Endothelial cell of umbilical vein (primary cell): ENCODE measurements at regions of chr19 and their contacts with region 1.

Region 1: GRCh38 chr19:44752816-44753618 is 4.5 kb downstream of the BCL3 start:
- DNase-seq: peak; percentile 91
- H3K4me3 ChIP-seq: peak overlapping the region in 1 of 3 experiments; percentile 17
- H3K27ac ChIP-seq: peak overlapping the region; percentile 86
- H3K4me1 ChIP-seq: peaks cover 44% of the 10 kb centered on the region
- H3K27me3 ChIP-seq: no peaks in the 10 kb centered on the region
- CTCF ChIP-seq: no peak
- POLR2A ChIP-seq: peak; percentile 40

Region 2: GRCh38 chr19:44677019-44677821 is 75.8 kb before region 1 on chr19:
- CTCF ChIA-PET with region 1: no interaction called
- POLR2A ChIA-PET with region 1: no interaction called
- dilution Hi-C with region 1: no loop called
- intact Hi-C with region 1: no loop called
- DNase-seq: peak; percentile 57
- H3K4me3 ChIP-seq: no peak overlapping the region
- H3K27ac ChIP-seq: peak overlapping the region; percentile 37
- H3K4me1 ChIP-seq: peaks cover 8% of the 10 kb centered on the region
- H3K27me3 ChIP-seq: no peaks in the 10 kb centered on the region
- CTCF ChIP-seq: no peak
- POLR2A ChIP-seq: no peak

Region 3: GRCh38 chr19:44702551-44703176 is 50.4 kb before region 1 on chr19:
- CTCF ChIA-PET with region 1: no interaction called
- POLR2A ChIA-PET with region 1: no interaction called
- dilution Hi-C with region 1: no loop called
- intact Hi-C with region 1: no loop called
- DNase-seq: no peak
- H3K4me3 ChIP-seq: no peak overlapping the region
- H3K27ac ChIP-seq: no peak overlapping the region
- H3K4me1 ChIP-seq: no peaks in the 10 kb centered on the region
- H3K27me3 ChIP-seq: no peaks in the 10 kb centered on the region
- CTCF ChIP-seq: no peak
- POLR2A ChIP-seq: no peak

Region 4: DNA sequence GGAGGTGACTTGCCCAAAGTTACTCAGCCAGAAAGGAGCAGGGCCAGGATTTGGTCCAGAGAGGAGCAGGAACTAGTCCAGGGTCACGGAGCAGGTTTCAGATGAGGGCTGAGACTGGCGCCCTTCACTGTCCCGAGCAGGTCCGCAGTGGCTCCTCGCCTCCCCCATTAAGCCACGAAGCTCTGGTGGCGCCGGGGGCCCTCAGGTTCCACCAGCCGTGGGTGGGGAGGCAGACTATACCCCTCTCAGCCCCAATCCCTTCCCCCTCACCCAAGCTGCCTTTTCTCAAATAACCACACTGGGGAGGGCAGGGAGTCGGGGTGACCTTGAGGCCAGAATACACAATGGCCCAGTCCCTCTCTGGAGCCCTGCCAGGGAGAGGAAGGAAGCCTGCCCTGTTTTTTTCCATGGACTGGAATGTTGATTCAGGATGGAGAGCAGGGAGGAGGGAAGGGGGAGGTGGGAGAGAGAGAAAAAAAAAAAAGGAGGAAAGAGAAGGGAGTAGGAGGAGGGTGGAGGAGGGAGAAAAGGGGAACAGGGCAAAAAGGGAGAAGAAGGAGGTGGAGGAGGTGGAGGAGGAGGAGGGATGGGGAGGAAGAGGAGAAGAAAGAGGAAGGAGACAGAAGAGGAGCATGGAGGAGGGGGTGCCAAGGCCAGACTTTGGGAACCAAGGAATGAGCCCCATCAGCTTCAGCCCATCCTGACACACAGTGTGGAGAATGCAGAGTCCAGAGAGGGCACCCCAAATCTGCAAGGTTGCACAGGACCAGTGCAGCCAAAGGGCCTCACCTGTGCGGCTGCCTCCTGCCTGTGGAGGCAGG is 34.4 kb before region 1 on chr19:
- CTCF ChIA-PET with region 1: interaction called, 82 read pairs
- POLR2A ChIA-PET with region 1: interaction called, 3 read pairs
- dilution Hi-C with region 1: no loop called
- intact Hi-C with region 1: loop called (anchors 2 kb)
- DNase-seq: peak; percentile 98
- H3K4me3 ChIP-seq: peak overlapping the region; percentile 11 to 72 (median 26)
- H3K27ac ChIP-seq: peak overlapping the region; percentile 100
- H3K4me1 ChIP-seq: peaks cover 38% of the 10 kb centered on the region
- H3K27me3 ChIP-seq: no peaks in the 10 kb centered on the region
- CTCF ChIP-seq: no peak
- POLR2A ChIP-seq: no peak

Region 5: GRCh38 chr19:44741841-44742352 is 11.1 kb before region 1 on chr19:
- CTCF ChIA-PET with region 1: interaction called, 10 read pairs
- POLR2A ChIA-PET with region 1: interaction called, 3 read pairs
- dilution Hi-C with region 1: no loop called
- intact Hi-C with region 1: no loop called
- DNase-seq: peak; percentile 98
- H3K4me3 ChIP-seq: no peak overlapping the region
- H3K27ac ChIP-seq: peak overlapping the region; percentile 96
- H3K4me1 ChIP-seq: peaks cover 25% of the 10 kb centered on the region
- H3K27me3 ChIP-seq: no peaks in the 10 kb centered on the region
- CTCF ChIP-seq: no peak
- POLR2A ChIP-seq: peak; percentile 83

Region 6: GRCh38 chr19:44869733-44870470 is 116.9 kb after region 1 on chr19:
- CTCF ChIA-PET with region 1: no interaction called
- POLR2A ChIA-PET with region 1: no interaction called
- dilution Hi-C with region 1: no loop called
- intact Hi-C with region 1: no loop called
- DNase-seq: peak; percentile 75
- H3K4me3 ChIP-seq: no peak overlapping the region
- H3K27ac ChIP-seq: peak overlapping the region; percentile 36
- H3K4me1 ChIP-seq: peaks cover 26% of the 10 kb centered on the region
- H3K27me3 ChIP-seq: no peaks in the 10 kb centered on the region
- CTCF ChIP-seq: no peak
- POLR2A ChIP-seq: no peak